Activated CD8-positive, alpha-beta T cell treated with anti-CD3 and anti-CD28 coated beads for 36 hours (primary cell): ENCODE measurements at regions of chr4 and their contacts with region 1.

Region 1: GRCh38 chr4:145234091-145234706 is 53.8 kb upstream of the OTUD4 start:
- DNase-seq: peak; percentile 79
- ATAC-seq: peak; percentile 98
- H3K4me3 Mint-ChIP-seq: no peak overlapping the region
- H3K27ac Mint-ChIP-seq: no peak overlapping the region
- H3K4me1 Mint-ChIP-seq: no peaks in the 10 kb centered on the region
- H3K27me3 Mint-ChIP-seq: no peaks in the 10 kb centered on the region
- CTCF ChIP-seq: peak; percentile 85

Region 2: GRCh38 chr4:144687466-144687865 is 546.7 kb before region 1 on chr4:
- CTCF ChIA-PET with region 1: no interaction called
- POLR2A ChIA-PET with region 1: no interaction called
- intact Hi-C with region 1: no loop called
- DNase-seq: no peak
- ATAC-seq: no peak
- H3K4me3 Mint-ChIP-seq: no peak overlapping the region
- H3K27ac Mint-ChIP-seq: no peak overlapping the region
- H3K4me1 Mint-ChIP-seq: no peaks in the 10 kb centered on the region
- H3K27me3 Mint-ChIP-seq: peaks cover 2% of the 10 kb centered on the region
- CTCF ChIP-seq: no peak

Region 3: DNA sequence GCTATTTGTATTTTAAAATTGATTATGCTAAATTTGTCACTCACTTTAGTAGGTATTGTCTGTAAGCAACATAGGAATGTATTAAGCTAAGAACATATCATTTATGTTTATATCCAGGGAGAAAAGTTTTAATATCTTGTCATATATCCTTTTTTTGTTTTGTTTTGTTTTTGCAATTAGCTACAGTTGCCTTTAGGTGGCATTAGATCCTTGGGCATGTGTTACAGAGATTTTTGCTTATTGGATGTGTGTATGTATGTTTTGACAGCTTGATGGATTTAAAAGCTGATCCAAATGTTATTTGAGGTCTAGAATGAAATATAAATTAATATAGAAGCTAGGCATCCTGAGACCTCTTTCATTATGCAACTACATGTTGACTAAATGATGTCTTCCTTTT is 17.7 kb before region 1 on chr4:
- CTCF ChIA-PET with region 1: interaction called, 14 read pairs
- POLR2A ChIA-PET with region 1: no interaction called
- intact Hi-C with region 1: no loop called
- DNase-seq: no peak
- ATAC-seq: no peak
- H3K4me3 Mint-ChIP-seq: no peak overlapping the region
- H3K27ac Mint-ChIP-seq: no peak overlapping the region
- H3K4me1 Mint-ChIP-seq: no peaks in the 10 kb centered on the region
- H3K27me3 Mint-ChIP-seq: peaks cover 4% of the 10 kb centered on the region
- CTCF ChIP-seq: peak; percentile 40

Region 4: DNA sequence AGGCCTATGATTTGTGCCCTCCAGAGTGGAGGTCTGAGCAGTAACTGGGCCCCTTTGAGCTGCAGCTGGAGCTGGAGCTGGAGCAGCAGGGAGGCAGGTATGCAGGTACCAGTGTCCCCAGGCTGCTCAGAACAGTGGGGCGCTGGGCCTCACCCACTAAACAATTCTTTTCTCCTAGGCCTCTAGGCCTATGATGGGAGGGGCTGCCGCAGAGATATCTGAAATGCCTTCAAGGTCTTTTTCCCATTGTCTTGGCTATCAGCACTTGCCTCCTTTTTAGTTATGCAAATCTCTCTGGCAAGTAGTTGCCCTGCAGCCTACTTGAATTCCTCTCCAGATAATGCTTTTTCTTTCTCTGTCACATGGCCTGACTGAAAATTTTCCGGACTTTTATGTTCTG is 25.9 kb after region 1 on chr4:
- CTCF ChIA-PET with region 1: no interaction called
- POLR2A ChIA-PET with region 1: no interaction called
- intact Hi-C with region 1: no loop called
- DNase-seq: no peak
- ATAC-seq: no peak
- H3K4me3 Mint-ChIP-seq: no peak overlapping the region
- H3K27ac Mint-ChIP-seq: no peak overlapping the region
- H3K4me1 Mint-ChIP-seq: no peaks in the 10 kb centered on the region
- H3K27me3 Mint-ChIP-seq: no peaks in the 10 kb centered on the region
- CTCF ChIP-seq: no peak

Region 5: GRCh38 chr4:145276050-145276449 is 41.9 kb after region 1 on chr4:
- CTCF ChIA-PET with region 1: no interaction called
- POLR2A ChIA-PET with region 1: no interaction called
- intact Hi-C with region 1: no loop called
- DNase-seq: no peak
- ATAC-seq: no peak
- H3K4me3 Mint-ChIP-seq: no peak overlapping the region
- H3K27ac Mint-ChIP-seq: no peak overlapping the region
- H3K4me1 Mint-ChIP-seq: no peaks in the 10 kb centered on the region
- H3K27me3 Mint-ChIP-seq: peaks cover 3% of the 10 kb centered on the region
- CTCF ChIP-seq: no peak

Region 6: GRCh38 chr4:145481164-145481941 is 247.2 kb after region 1 on chr4 and contains the start of gene SMAD1:
- CTCF ChIA-PET with region 1: no interaction called
- POLR2A ChIA-PET with region 1: no interaction called
- intact Hi-C with region 1: loop called (anchors 5 kb)
- DNase-seq: peak; percentile 41
- ATAC-seq: peak; percentile 43
- H3K4me3 Mint-ChIP-seq: peak within 1 kb of the TSS; percentile 69
- H3K27ac Mint-ChIP-seq: no peak within 1 kb of the TSS
- H3K4me1 Mint-ChIP-seq: peaks cover 5% of the 10 kb centered on the region
- H3K27me3 Mint-ChIP-seq: peaks cover 36% of the 10 kb centered on the region
- CTCF ChIP-seq: no peak
- total RNA-seq, gene SMAD1: 0.67 to 0.92 TPM

Region 7: DNA sequence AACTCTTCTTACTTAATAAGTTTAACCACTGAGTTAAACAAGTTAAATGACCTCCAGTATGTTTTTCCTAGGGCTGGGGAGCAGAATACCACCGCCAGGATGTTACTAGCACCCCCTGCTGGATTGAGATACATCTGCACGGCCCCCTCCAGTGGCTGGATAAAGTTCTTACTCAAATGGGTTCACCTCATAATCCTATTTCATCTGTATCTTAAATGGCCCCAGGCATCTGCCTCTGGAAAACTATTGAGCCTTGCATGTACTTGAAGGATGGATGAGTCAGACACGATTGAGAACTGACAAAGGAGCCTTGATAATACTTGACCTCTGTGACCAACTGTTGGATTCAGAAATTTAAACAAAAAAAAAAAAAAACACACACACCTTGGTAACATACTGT is 323.5 kb after region 1 on chr4:
- CTCF ChIA-PET with region 1: interaction called, 17 read pairs
- POLR2A ChIA-PET with region 1: no interaction called
- intact Hi-C with region 1: loop called (anchors 1 kb)
- DNase-seq: peak; percentile 72
- ATAC-seq: peak; percentile 85
- H3K4me3 Mint-ChIP-seq: no peak overlapping the region
- H3K27ac Mint-ChIP-seq: no peak overlapping the region
- H3K4me1 Mint-ChIP-seq: peaks cover under 1% of the 10 kb centered on the region
- H3K27me3 Mint-ChIP-seq: no peaks in the 10 kb centered on the region
- CTCF ChIP-seq: peak; percentile 88

Region 8: DNA sequence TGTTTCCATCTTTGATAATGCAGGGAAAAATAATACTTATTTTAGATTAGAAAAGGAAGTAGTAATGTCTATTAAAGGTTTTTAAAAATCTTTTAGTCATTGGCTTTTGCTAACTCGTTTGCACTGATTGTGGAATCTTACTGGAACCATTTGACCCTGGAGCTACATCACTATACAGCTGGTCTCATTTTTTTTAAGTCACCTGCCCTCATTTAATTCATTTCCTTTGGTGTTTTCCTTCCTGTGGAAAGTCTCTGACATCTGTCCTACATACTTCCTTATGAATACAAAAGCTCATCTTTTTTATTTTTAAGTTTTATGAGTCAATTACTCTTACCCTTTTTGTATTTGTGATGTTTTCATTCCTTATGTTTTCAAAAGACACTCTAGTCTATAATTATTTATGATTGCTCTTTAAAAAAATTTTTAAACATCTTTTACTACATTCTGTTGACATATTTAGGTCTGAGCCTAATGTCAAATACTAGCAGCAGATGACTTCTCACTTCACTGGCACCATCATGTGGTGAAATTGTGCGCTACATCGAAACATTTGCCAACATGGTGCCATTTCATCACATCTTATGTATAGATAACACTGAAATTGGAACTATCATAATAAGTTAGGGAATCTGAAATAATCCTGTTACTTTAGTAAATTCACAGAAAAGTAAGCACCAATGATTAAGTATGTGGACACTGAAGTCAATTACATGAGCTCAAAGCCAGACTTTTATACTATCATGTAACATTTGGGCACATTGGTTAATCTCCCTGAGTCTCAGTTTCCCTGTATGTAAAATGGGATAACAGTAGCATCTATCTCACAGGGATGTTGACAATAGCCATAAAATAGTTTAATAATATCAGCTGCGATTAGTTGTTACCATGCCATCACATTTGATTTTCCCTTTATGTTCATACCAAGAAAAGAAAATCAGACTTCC is 375.6 kb after region 1 on chr4:
- CTCF ChIA-PET with region 1: interaction called, 35 read pairs
- POLR2A ChIA-PET with region 1: no interaction called
- intact Hi-C with region 1: loop called (anchors 1 kb)
- DNase-seq: peak; percentile 87
- ATAC-seq: peak; percentile 77
- H3K4me3 Mint-ChIP-seq: no peak overlapping the region
- H3K27ac Mint-ChIP-seq: no peak overlapping the region
- H3K4me1 Mint-ChIP-seq: peaks cover 14% of the 10 kb centered on the region
- H3K27me3 Mint-ChIP-seq: peaks cover 2% of the 10 kb centered on the region
- CTCF ChIP-seq: peak; percentile 79